Right cardiac atrium (tissue), 5 donors: ENCODE measurements at regions of chr1 and their contacts with region 1.

Region 1: GRCh38 chr1:163315773-163316374 is 5.9 kb upstream of the NUF2 start:
- DNase-seq: peak in 1 of 3 donors; percentile 14
- ATAC-seq: no peak
- H3K4me3 ChIP-seq: no peak overlapping the region
- H3K27ac ChIP-seq: no peak overlapping the region
- H3K4me1 ChIP-seq: no peaks in the 10 kb centered on the region
- H3K27me3 ChIP-seq: no peaks in the 10 kb centered on the region

Region 2: DNA sequence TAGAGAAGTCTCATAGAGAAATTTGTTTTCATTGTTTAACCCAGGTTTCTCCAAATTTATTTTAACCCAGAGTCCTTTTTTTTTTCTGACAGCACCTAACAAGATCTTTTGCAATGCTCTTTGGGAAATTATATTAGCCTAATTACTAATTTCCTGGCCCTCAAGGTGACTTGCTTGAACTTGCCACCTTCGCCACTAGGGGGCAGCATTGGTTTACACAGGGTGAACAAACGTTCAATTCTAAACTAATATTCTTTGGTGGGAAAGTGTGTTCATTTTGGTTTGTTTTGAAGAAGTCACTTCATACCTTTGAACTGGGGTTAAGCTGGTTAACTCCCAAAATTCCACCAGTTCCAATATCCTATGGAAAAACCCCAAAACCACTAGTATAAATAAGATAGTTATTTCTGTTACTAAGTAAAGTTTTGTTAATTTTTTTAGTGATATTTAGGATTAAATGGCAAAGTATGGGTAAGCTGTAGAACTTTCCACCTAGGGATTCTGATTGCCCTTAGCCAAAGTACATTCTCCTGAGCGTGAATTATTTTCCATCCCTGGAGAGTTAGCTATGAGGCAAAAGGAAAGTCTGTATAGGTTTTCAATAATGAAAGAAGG is 467.9 kb before region 1 on chr1:
- intact Hi-C with region 1: loop called in 3 of 4 experiments (anchors 5 to 10 kb)
- DNase-seq: peak; percentile 81 to 90 (median 84)
- ATAC-seq: peak in 1 of 2 donors; percentile 37
- H3K4me3 ChIP-seq: no peak overlapping the region
- H3K27ac ChIP-seq: no peak overlapping the region
- H3K4me1 ChIP-seq: no peaks in the 10 kb centered on the region
- H3K27me3 ChIP-seq: no peaks in the 10 kb centered on the region

Region 3: GRCh38 chr1:162854245-162854882 is 461.5 kb before region 1 on chr1:
- intact Hi-C with region 1: loop called (anchors 5 to 10 kb)
- DNase-seq: peak; percentile 47 to 73 (median 62)
- ATAC-seq: peak; percentile 57 to 69
- H3K4me3 ChIP-seq: no peak overlapping the region
- H3K27ac ChIP-seq: no peak overlapping the region
- H3K4me1 ChIP-seq: no peaks in the 10 kb centered on the region
- H3K27me3 ChIP-seq: no peaks in the 10 kb centered on the region

Region 4: GRCh38 chr1:162878000-162878596 is 437.8 kb before region 1 on chr1:
- intact Hi-C with region 1: loop called in 1 of 4 experiments (anchors 10 kb)
- DNase-seq: peak; percentile 33 to 59 (median 45)
- ATAC-seq: peak; percentile 64 to 65
- H3K4me3 ChIP-seq: no peak overlapping the region
- H3K27ac ChIP-seq: no peak overlapping the region
- H3K4me1 ChIP-seq: no peaks in the 10 kb centered on the region
- H3K27me3 ChIP-seq: no peaks in the 10 kb centered on the region

Region 5: DNA sequence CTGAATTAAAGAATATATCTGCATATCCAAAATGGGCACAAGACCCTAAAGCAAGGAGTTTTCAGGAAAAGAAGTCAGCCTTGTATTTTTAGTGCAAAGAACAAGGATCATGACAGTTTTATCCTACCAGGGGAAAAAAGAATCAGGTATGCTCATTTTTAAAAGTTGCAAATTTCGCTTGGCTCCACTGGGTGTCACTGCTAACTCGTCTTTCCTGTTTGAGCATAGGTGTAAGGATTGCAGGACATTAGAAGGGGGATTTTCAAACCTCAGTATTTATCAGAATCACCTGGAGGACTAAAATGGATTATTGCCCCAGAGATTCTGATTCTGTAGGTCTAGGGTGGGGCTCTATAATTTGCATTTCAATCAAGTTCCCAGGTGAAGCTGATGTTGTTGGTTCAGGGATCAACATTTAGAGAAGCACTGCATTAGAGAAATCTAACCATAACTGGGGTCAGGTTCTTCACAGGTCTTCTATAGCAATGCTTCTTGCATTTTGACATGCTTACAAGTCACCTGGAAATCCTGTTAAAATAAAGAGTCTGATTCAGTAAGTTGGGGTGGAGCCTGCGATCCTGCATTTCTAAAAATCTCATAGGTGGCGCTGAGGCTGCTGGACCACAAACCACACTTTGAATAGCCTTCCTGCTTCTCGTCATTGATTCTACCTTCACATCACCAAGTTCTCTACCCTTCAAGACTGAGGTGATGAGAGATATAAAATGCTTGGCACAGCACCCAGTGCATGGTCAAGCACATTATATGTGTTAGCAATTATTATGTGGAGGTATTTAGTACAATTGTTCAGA is 45.5 kb after region 1 on chr1:
- intact Hi-C with region 1: no loop called
- DNase-seq: no peak
- ATAC-seq: no peak
- H3K4me3 ChIP-seq: no peak overlapping the region
- H3K27ac ChIP-seq: no peak overlapping the region
- H3K4me1 ChIP-seq: no peaks in the 10 kb centered on the region
- H3K27me3 ChIP-seq: no peaks in the 10 kb centered on the region